H1 (cell line): ENCODE measurements at regions of chr9 and their contacts with region 1.

Region 1: GRCh38 chr9:38339087-38339486 is 53.4 kb upstream of the ALDH1B1 start:
- DNase-seq: no peak
- H3K4me3 ChIP-seq: no peak overlapping the region
- H3K27ac ChIP-seq: no peak overlapping the region
- H3K4me1 ChIP-seq: peaks cover 0 to 4% (median 1%) of the 10 kb centered on the region in 4 experiments; a peak in 3 of 7 replicates
- H3K27me3 ChIP-seq: peaks cover 0 to 2% (median 0%) of the 10 kb centered on the region in 4 experiments; a peak in 2 of 7 replicates
- CTCF ChIP-seq: no peak
- EP300 ChIP-seq: no peak
- POLR2A ChIP-seq: no peak
- RAD21 ChIP-seq: no peak

Region 2: DNA sequence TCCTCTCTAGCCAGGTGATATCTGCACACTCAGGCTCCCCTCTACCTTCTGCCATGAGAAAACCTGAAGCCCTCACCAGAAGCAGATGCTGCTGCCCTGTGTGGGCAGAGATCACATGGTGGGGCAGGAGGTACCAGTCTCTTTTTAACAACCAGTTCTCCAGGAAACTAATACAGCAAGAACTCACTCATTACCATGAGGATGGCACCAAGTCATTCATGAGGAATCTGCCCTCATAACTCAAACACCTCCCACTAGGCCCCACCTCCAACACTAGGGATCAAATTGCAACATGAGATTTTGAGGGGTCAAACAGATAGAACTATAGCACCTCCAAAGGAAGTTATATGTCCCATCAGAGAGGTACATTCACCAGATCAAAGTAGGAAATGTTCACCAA is 133.8 kb before region 1 on chr9:
- CTCF ChIA-PET with region 1: no interaction called
- POLR2A ChIA-PET with region 1: no interaction called
- DNase-seq: peak in 1 of 2 experiments; percentile 31
- H3K4me3 ChIP-seq: no peak overlapping the region
- H3K27ac ChIP-seq: no peak overlapping the region
- H3K4me1 ChIP-seq: peaks cover 0 to 8% (median under 1%) of the 10 kb centered on the region in 4 experiments; a peak in 4 of 7 replicates
- H3K27me3 ChIP-seq: peaks cover 12 to 41% (median 30%) of the 10 kb centered on the region in 4 experiments
- CTCF ChIP-seq: no peak
- EP300 ChIP-seq: no peak
- POLR2A ChIP-seq: no peak
- RAD21 ChIP-seq: no peak

Region 3: DNA sequence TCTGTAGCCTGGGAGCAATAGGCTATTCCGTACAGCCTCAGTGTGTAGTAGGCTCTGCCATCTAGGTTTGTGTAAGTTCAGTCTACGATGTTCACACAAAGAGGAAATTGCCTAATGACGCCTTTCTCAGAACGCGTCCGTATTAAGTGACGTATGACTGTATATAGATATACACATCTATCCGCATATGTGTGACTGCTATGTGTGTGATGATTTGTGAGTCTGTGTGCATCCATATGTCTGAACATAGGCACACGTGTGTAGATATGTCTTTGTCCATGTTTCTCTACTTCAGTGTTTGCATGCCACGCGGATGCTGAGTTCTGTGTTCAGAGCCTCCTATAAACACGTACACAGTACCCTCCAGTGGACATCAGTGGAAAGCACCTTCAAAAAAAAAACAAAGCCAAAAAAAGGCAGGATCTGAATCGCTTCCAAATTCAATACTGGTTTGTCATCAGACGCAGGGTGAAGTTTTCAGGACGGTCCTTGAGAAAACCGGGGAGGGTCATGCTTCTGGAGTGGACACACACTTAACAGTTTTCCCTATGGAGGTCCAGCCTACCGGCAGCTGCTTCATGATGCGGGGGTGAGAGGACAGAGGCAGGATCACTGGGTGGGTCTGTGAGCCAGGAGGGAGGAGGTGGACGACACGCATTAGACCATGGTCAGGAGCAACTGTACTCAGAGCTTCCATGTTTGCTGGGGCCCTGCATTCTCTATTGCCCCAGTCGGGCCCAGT is 23.9 kb after region 1 on chr9:
- CTCF ChIA-PET with region 1: interaction called, 26 read pairs
- POLR2A ChIA-PET with region 1: interaction called, 3 read pairs
- DNase-seq: no peak
- H3K4me3 ChIP-seq: no peak overlapping the region
- H3K27ac ChIP-seq: no peak overlapping the region
- H3K4me1 ChIP-seq: peaks cover 0 to 4% (median 0%) of the 10 kb centered on the region in 4 experiments; a peak in 1 of 7 replicates
- H3K27me3 ChIP-seq: no peaks in the 10 kb centered on the region
- CTCF ChIP-seq: peak; percentile 7 to 62 (median 60)
- EP300 ChIP-seq: no peak
- POLR2A ChIP-seq: no peak
- RAD21 ChIP-seq: peak; percentile 87 to 89

Region 4: GRCh38 chr9:38371495-38371894 is 32.4 kb after region 1 on chr9:
- CTCF ChIA-PET with region 1: interaction called, 10 read pairs
- POLR2A ChIA-PET with region 1: no interaction called
- DNase-seq: no peak
- H3K4me3 ChIP-seq: no peak overlapping the region
- H3K27ac ChIP-seq: no peak overlapping the region
- H3K4me1 ChIP-seq: no peaks in the 10 kb centered on the region; a peak in 1 of 7 replicates
- H3K27me3 ChIP-seq: no peaks in the 10 kb centered on the region; a peak in 2 of 7 replicates
- CTCF ChIP-seq: no peak
- EP300 ChIP-seq: no peak
- POLR2A ChIP-seq: no peak
- RAD21 ChIP-seq: peak; percentile 26 to 37; a peak in 2 of 4 replicates

Region 5: DNA sequence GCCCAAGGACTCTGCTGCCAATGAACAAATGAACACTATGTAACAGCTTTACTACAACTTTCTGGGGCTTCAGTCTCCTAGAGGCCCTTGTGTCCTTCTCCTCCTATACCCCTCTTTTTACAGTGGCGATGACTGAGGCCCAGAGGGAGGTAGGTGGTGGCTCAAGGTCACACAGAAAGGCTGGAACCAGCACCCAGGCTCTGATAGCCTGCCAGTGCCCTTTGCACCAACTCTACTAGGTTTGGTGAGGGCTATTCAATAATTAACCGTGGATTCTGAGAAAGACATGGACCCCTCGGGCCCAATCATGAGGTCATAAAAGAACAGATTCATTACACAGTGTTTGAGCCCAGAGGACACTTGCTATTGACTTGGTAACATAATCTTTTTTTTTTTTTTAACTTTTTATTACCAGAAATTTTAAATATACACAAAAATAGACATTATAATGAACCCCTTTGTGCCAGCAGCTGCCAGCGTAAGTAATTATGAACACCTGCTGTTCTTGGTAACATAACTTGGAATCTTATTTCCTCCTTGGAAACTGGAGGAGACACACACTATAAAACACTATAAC is 47.3 kb after region 1 on chr9:
- CTCF ChIA-PET with region 1: interaction called, 11 read pairs
- POLR2A ChIA-PET with region 1: interaction called, 3 read pairs
- DNase-seq: no peak
- H3K4me3 ChIP-seq: no peak overlapping the region
- H3K27ac ChIP-seq: no peak overlapping the region
- H3K4me1 ChIP-seq: peaks cover 0 to 7% (median 3%) of the 10 kb centered on the region in 4 experiments; a peak in 4 of 7 replicates
- H3K27me3 ChIP-seq: peaks cover 5 to 35% (median 20%) of the 10 kb centered on the region in 4 experiments
- CTCF ChIP-seq: no peak
- EP300 ChIP-seq: no peak
- POLR2A ChIP-seq: no peak
- RAD21 ChIP-seq: no peak

Region 6: DNA sequence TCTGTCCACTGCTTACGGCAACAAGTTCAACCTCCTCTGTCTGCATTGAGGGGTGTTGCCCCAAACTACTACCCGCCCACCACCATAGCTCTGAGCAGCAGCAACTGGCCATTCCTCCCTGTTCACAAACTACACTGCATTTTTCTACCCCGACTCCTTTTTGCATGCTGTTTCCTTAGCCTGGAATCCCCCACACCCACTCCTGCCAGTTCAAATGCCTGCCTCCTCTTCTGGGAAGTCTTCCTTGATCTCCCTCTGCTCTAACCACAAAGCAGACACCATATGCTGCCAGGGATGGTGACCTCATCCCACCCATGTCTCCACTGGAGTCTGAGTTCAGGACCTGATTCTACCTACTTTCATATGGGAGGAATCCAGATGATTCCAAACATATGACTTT is 66.7 kb after region 1 on chr9:
- CTCF ChIA-PET with region 1: interaction called, 29 read pairs
- POLR2A ChIA-PET with region 1: no interaction called
- DNase-seq: no peak
- H3K4me3 ChIP-seq: no peak overlapping the region
- H3K27ac ChIP-seq: no peak overlapping the region
- H3K4me1 ChIP-seq: peaks cover 0 to 5% (median 0%) of the 10 kb centered on the region in 4 experiments; a peak in 1 of 7 replicates
- H3K27me3 ChIP-seq: no peaks in the 10 kb centered on the region
- CTCF ChIP-seq: no peak
- EP300 ChIP-seq: no peak
- POLR2A ChIP-seq: no peak
- RAD21 ChIP-seq: no peak

Region 7: DNA sequence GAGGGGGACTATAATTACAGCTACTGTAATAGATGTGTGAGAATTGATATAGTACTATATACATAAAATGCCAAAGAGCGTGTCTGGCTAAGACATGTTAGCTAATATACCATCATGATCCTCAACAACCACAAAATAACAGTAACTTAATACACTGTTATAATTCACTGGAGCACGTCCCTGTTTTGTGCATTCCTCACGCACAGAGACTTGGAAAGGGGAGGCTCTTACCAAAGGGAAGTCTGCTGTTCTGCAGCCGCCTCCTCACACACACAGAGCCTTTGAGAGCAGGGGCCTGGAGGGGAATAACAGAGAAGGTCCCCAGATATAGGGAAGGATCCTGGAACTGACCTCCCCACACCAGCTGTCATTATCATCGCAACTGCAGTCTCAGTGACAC is 184.0 kb after region 1 on chr9:
- CTCF ChIA-PET with region 1: no interaction called
- POLR2A ChIA-PET with region 1: no interaction called
- DNase-seq: no peak
- H3K4me3 ChIP-seq: no peak overlapping the region
- H3K27ac ChIP-seq: no peak overlapping the region
- H3K4me1 ChIP-seq: no peaks in the 10 kb centered on the region; a peak in 1 of 7 replicates
- H3K27me3 ChIP-seq: no peaks in the 10 kb centered on the region
- CTCF ChIP-seq: no peak
- EP300 ChIP-seq: no peak
- POLR2A ChIP-seq: no peak
- RAD21 ChIP-seq: no peak